ENCODE measurements at regions of chr2 and their contacts with region 1.

Region 1: GRCh38 chr2:68837164-68837860 is 33.9 kb downstream of the BMP10 start:
- H3K4me3 Mint-ChIP-seq: no peak overlapping the region
- H3K27ac Mint-ChIP-seq: peak overlapping the region; percentile 71
- H3K4me1 Mint-ChIP-seq: peaks cover 48% of the 10 kb centered on the region
- H3K27me3 Mint-ChIP-seq: no peaks in the 10 kb centered on the region

Region 2: DNA sequence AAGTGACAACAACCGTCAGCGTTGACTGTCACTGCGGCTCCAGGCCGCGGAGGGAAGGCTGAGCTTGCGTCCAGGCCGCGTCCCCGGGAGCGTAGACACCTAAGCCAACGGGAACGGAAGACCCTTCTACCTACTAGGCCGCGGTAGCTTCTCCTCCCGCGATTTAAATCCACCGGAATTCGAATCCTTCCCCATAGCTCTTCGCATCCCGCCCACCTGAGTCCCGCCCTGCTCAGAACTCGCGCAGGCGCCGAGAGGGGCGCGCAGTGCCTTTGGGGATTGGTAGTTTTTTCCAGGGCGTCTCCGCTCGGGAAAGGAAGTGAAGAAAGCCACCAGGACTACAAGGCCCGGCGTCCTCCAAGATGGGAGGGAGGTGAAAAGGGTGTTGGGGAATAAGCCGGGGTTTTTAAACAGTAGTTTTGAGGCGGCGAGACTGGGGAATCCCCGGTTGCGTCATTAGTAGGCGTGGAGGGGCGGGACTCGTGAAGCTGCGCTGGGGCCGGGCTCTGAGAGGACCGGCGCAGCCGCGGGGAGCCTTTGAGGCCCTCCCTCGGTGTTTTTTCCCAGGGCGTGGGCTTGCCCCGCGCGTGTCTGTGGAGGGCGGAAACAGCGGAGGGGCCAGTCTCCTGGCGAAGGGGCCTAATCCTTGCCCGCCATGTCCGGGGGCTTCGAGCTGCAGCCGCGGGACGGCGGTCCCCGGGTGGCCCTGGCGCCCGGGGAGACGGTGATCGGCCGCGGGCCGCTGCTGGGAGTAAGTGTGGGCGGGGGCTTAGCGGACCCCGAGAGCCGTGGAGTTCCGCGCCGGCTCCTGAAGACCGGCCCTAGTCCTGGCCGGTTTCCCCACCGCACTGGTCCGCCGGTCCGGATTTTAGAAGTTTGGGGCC is 370.0 kb before region 1 on chr2 and contains the starts of genes APLF and FBXO48:
- intact Hi-C with region 1: loop called (anchors 2 kb)
- H3K4me3 Mint-ChIP-seq: peak within 1 kb of the TSS; percentile 96
- H3K27ac Mint-ChIP-seq: peak within 1 kb of the TSS; percentile 94
- H3K4me1 Mint-ChIP-seq: peaks cover 29% of the 10 kb centered on the region
- H3K27me3 Mint-ChIP-seq: no peaks in the 10 kb centered on the region

Region 3: GRCh38 chr2:68519236-68519635 is 318.1 kb before region 1 on chr2:
- intact Hi-C with region 1: no loop called
- H3K4me3 Mint-ChIP-seq: no peak overlapping the region
- H3K27ac Mint-ChIP-seq: no peak overlapping the region
- H3K4me1 Mint-ChIP-seq: no peaks in the 10 kb centered on the region
- H3K27me3 Mint-ChIP-seq: no peaks in the 10 kb centered on the region

Region 4: GRCh38 chr2:68709421-68709911 is 127.8 kb before region 1 on chr2:
- intact Hi-C with region 1: loop called (anchors 2 kb)
- H3K4me3 Mint-ChIP-seq: no peak overlapping the region
- H3K27ac Mint-ChIP-seq: peak overlapping the region; percentile 61
- H3K4me1 Mint-ChIP-seq: peaks cover 34% of the 10 kb centered on the region
- H3K27me3 Mint-ChIP-seq: no peaks in the 10 kb centered on the region

Region 5: DNA sequence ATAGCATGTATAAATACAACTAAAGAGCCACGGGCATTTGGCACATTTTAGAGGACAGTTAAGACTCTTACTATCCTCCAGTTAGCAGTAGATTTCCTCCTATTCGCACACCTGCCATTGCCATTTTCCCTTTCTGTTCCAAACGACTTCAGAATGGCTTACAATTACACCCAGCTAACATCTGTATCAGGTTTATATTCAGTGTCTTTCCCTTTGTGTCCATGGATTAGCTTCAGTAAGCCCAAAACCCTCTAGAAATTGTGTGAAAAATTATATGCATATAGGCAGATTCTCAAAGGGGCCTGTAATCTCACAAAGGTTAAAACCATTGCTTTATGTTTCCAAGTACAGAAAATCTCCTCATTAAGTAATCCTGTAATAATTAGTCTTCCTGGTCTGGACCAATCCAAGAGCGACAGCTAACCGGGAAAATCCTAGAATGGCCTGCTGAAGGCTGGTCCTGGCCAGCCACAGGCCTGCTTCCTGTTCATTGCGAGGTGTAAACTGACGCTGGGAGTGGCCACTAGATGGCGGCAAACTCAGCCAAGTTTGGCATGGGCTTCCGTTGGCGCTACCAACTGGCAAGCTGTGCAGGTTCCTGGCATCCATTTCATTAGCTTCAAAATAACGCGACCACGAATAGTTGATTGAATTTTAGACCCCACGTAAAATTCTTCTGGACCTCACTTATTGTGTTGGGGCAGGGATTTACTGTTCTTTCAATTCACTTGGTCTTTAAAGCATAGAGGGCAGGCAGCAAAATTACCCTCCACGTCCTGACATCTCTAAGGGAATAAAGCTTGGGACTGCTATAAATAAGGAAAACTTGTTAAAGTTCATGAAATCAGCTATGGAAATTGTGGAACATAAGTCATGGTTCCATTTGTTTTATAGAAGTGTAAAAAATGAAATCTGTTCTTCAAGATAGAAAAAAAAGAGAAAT is 85.6 kb before region 1 on chr2:
- intact Hi-C with region 1: loop called (anchors 2 kb)
- H3K4me3 Mint-ChIP-seq: no peak overlapping the region
- H3K27ac Mint-ChIP-seq: peak overlapping the region; percentile 56
- H3K4me1 Mint-ChIP-seq: peaks cover 85% of the 10 kb centered on the region
- H3K27me3 Mint-ChIP-seq: no peaks in the 10 kb centered on the region

Region 6: DNA sequence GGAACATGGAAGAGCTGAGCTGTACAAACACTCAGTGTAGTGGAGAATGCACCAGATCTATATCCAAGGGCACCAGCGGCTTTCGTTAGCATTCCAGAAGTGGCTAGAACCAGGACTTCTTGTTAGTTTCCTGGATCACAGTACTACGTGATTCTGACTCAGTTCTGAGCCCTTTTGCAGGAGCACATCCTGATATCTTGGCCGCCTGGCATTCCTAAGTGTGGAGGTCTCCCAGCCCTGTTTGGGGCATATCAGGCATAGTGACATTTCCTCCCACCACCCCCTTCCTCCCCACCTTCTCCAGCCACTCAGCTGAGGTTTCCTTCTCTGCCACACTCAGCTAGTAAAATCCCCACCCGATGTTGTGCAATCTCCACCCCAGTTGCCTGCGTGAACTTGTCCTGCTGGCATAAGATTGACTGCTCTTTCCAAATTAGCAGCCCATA is 29.5 kb before region 1 on chr2:
- intact Hi-C with region 1: no loop called
- H3K4me3 Mint-ChIP-seq: no peak overlapping the region
- H3K27ac Mint-ChIP-seq: peak overlapping the region; percentile 35
- H3K4me1 Mint-ChIP-seq: peaks cover 60% of the 10 kb centered on the region
- H3K27me3 Mint-ChIP-seq: no peaks in the 10 kb centered on the region

Region 7: DNA sequence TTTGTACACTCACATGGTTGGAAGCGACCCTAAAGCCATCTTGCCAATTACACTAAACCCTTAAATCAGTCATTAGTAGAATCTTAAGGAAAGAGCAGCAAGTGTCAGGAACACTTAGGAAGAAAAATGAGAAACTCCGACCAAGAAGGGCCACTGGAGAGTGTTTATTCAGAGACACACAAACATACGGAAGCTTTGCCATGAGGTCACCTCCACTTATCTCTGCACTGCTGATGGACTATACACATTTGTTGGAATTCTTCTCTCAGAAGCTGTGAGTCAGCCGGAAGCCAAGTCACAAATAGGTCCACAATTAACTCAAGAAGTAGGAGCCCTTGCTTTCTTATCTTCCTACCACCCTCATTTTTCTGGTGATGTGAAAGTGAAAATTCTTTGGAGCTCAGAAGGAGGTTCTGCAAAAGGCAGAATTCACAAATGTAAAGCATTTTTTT is 12.3 kb after region 1 on chr2:
- intact Hi-C with region 1: no loop called
- H3K4me3 Mint-ChIP-seq: no peak overlapping the region
- H3K27ac Mint-ChIP-seq: peak overlapping the region; percentile 71
- H3K4me1 Mint-ChIP-seq: peaks cover 60% of the 10 kb centered on the region
- H3K27me3 Mint-ChIP-seq: no peaks in the 10 kb centered on the region

Region 8: DNA sequence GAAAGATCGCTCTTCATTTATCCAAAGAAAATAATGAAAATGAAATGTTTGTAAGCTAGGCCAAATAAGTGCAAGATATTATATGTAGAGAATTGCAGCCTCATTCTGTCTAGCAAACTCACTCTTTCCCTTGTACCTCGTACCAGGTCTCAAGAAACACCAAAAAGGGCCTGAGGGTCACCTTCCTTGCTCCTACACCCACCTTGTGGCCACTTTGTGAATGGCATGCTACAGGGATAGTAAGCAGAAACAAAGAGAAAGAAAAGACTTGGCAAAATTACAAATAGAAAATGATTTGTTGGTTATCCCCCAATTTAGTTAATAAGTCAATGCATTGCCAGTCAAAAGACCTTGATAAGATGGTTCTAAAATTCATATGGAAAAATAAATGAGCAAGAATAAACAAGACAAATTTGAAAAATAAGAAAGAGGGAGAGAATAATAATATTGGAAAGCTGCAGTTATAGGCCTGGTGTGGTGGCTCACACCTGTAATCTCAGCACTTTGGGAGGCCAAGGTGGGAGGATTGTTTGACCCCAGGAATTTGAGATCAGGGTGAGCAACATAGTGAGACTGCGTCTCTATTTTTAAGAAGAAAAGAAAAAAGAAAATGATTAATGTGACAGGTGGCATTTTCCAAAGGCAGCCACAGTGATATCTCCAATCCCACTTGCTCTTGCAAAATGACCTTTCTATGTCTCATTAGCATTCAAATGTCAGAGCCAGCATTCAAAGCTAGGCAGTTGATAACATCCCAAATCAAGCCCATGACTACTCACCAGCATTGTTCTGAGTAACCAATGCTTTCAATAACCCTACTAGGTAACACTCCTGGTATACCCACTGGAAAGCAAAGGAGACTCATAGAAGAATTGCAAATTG is 72.7 kb after region 1 on chr2:
- intact Hi-C with region 1: loop called (anchors 1 kb)
- H3K4me3 Mint-ChIP-seq: no peak overlapping the region
- H3K27ac Mint-ChIP-seq: peak overlapping the region; percentile 62
- H3K4me1 Mint-ChIP-seq: peaks cover 26% of the 10 kb centered on the region
- H3K27me3 Mint-ChIP-seq: no peaks in the 10 kb centered on the region

Region 9: GRCh38 chr2:68925295-68925896 is 88.1 kb after region 1 on chr2:
- intact Hi-C with region 1: loop called (anchors 1 kb)
- H3K4me3 Mint-ChIP-seq: no peak overlapping the region
- H3K27ac Mint-ChIP-seq: no peak overlapping the region
- H3K4me1 Mint-ChIP-seq: peaks cover 3% of the 10 kb centered on the region
- H3K27me3 Mint-ChIP-seq: peaks cover 8% of the 10 kb centered on the region

Measured in dendritic cell treated with granulocyte-macrophage colony-stimulating factor and Interleukin-4, amounts not matched to agents 40 ng/mL and 50 ng/mL, for 4 days (primary cell).